ENCODE measurements at regions of chr2 and their contacts with region 1.

Region 1: DNA sequence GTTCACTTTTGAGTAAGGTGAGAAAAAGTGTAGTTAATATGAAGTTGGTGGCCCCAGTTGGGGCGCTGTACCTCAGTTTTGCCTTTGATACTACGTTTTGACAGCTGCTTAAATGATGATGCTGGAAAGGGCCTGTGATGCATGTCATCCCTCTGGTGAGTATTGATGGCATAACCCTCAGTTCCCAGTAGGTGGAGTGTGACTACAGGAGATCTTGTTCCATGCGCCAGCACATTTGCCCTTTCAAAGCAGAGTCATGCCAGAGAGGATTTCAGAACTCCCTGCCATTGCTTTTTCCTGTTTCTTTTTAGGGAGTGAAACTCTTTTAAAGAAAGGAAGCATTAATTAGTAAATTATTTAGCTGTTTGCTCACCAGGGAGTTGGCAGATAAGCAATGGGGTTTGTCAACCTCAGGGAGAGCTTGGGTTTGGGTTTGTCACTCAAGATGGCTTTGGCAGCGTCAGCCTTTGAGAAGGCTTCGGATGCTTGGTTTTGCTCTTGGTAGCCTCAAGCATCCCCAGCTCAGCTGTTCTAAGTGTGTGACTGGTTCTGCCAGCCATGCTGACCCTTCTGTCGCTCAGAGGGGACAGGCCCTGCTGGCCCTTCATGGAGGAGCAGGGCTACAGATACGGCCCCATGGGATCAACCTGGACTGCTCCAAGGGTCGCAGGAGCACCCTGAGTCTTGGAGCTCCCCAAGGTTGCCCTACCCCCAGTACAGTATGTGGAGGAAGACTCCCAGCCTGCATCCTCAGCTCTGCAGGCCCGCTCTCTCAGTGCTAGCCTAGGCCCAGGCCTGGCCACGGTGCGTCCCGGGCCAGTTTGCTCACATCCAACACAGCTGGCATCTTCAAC is 29.1 kb downstream of the ARMC9 start:
- DNase-seq: peak; percentile 82
- H3K4me3 ChIP-seq: no peak overlapping the region
- H3K27ac ChIP-seq: no peak overlapping the region
- H3K4me1 ChIP-seq: no peaks in the 10 kb centered on the region
- H3K27me3 ChIP-seq: no peaks in the 10 kb centered on the region
- CTCF ChIP-seq: peak; percentile 83

Region 2: DNA sequence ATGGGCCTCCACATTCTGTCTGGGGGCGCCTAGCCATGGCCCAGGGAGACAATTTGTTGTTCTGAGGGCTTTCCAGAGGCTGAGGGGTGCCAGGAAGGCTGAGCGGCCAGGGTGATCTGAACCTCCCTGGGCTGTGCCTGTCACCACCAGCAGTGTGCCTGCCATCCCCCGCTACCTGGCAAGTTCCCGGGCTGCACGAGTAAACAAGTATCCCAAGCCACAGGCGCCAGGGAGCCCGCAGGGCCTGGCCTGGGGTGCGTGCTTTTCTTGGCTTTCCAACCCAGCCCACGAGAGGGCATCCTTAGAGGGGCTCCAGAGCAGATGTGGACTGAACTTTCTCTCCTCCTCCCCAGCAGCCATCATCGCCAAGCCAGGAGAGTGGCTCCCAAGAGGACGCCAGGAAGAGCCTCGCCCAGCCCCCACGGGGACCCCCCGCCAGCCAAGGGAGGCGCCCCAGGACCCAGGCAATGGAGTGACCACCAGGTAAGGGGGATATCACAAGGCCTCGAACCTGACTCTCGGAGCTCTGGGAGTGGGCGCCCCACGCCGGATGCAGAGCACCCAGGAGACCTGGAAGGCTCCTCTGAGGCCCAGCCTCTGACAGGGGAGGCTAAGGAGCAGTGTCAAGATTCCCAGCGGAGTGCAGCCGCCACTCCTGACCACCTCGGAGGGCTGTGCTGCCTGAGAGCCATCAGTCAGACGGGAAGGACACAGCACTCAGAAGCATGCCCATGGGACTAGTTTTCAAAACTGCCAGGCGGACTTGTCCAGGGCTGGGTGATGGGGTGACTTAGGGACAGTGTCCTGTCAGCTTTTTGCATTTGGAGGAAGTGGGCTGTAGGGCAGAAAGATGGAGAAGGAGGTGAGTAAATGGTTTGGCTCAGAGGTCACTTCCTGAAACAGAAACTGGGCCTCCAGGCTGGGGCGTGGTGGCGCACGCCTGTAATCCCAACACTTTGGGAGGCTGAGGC is 133.2 kb after region 1 on chr2:
- CTCF ChIA-PET with region 1: interaction called, 10 read pairs
- POLR2A ChIA-PET with region 1: no interaction called
- intact Hi-C with region 1: no loop called
- DNase-seq: no peak
- H3K4me3 ChIP-seq: no peak overlapping the region
- H3K27ac ChIP-seq: no peak overlapping the region
- H3K4me1 ChIP-seq: no peaks in the 10 kb centered on the region
- H3K27me3 ChIP-seq: no peaks in the 10 kb centered on the region
- CTCF ChIP-seq: no peak

Region 3: DNA sequence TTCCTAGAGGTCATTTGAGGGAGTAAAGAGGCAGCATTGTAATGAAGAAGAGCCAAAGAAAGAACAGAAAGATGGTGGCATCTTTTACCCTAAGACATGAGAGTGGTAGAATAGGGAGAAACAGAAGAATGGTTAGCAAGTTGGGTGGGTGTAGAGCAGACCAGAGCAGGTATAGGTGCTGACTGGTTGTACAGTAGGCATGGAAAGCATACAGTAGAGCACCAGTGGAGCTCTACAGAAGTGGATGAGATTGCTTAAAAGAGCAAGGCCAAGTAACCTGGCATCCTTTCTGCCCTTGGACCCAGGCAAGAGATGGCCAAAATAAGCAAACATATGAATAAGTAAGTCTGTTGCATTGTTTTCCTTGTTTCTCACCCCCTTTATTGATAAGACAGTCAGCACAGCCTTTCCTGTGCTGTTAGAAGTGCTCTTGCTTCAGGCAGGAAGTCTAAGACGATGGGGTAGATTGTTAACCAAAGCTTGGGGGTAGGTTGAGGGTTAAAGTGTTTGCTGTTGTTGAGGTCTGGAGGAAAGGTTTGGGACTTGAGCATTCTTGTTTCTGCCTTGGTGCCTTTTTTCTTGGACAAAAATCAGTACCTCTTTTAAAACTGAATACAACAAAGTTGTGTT is 810.8 kb after region 1 on chr2:
- CTCF ChIA-PET with region 1: no interaction called
- POLR2A ChIA-PET with region 1: no interaction called
- intact Hi-C with region 1: no loop called
- DNase-seq: no peak
- H3K4me3 ChIP-seq: no peak overlapping the region
- H3K27ac ChIP-seq: no peak overlapping the region
- H3K4me1 ChIP-seq: peaks cover 8% of the 10 kb centered on the region
- H3K27me3 ChIP-seq: no peaks in the 10 kb centered on the region
- CTCF ChIP-seq: no peak